Activated T-helper 2 cell treated with anti-CD3 and anti-CD28 coated beads, Interferon-gamma antibody, Interleukin-2, Interleukin-4, amounts not matched to agents 10 μg/mL and 5 μg/mL and 100 μg/mL, durations not matched to agents 14 hours and 24 hours and 36 hours (primary cell): ENCODE measurements at regions of chr17 and their contacts with region 1.

Region 1: GRCh38 chr17:74748529-74749365 is at the start of gene NHERF1:
- DNase-seq: peak; percentile 93
- H3K4me3 Mint-ChIP-seq: peak within 1 kb of the TSS; percentile 97
- H3K27ac Mint-ChIP-seq: peak within 1 kb of the TSS; percentile 81
- H3K4me1 Mint-ChIP-seq: peaks cover 57% of the 10 kb centered on the region
- H3K27me3 Mint-ChIP-seq: no peaks in the 10 kb centered on the region
- total RNA-seq, gene NHERF1: 129 and 133 TPM in 2 replicates

Region 2: GRCh38 chr17:74280093-74280513 is 468.6 kb before region 1 on chr17:
- intact Hi-C with region 1: loop called (anchors 5 kb)
- DNase-seq: peak; percentile 69
- H3K4me3 Mint-ChIP-seq: peak overlapping the region; percentile 9
- H3K27ac Mint-ChIP-seq: peak overlapping the region; percentile 90
- H3K4me1 Mint-ChIP-seq: peaks cover 50% of the 10 kb centered on the region
- H3K27me3 Mint-ChIP-seq: no peaks in the 10 kb centered on the region

Region 3: GRCh38 chr17:74759243-74759801 is 10.6 kb after region 1 on chr17:
- intact Hi-C with region 1: loop called (anchors 1 kb)
- DNase-seq: peak; percentile 53
- H3K4me3 Mint-ChIP-seq: peak overlapping the region; percentile 41
- H3K27ac Mint-ChIP-seq: peak overlapping the region; percentile 65
- H3K4me1 Mint-ChIP-seq: peaks cover 45% of the 10 kb centered on the region
- H3K27me3 Mint-ChIP-seq: no peaks in the 10 kb centered on the region

Region 4: DNA sequence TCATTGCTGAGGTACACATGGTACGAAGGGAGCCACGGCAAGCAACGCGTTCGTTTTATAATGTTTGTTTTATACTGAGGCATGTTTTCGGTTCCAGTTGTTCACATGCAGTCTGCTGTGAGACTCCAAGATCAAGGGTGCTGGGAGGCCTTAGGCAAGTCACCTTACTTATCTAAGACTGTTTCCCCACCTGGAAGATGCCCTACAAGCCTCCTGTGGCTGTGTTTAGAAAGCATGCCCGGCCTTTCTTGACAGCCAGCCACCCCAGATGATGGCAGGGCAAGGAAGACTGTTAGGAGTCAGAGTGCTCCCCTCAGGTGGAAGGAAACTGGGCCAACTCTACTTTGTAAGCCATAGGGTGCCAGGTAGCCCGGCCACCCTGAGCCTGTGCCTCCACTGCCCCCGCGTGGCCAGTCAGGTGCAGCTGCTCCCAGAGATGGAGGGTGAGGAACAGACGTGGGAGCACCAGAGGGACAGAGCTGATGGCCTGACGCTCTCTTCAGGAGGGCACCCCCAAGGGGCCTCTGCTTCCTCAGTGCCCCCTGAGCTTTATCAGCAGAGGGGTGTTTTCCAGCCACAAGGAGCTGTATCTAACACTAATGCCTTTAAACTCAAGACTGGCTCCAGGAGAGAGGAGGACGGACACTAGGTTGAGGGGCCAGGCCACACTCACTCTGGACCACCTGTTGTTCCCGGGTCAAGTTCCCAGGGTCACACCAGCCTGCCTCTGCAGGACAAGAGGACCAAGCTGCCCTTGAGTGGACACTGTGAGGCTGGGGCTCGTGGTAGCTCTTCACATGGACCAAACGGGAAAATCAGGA is 22.0 kb after region 1 on chr17:
- intact Hi-C with region 1: loop called (anchors 1 kb)
- DNase-seq: peak; percentile 60
- H3K4me3 Mint-ChIP-seq: no peak overlapping the region
- H3K27ac Mint-ChIP-seq: peak overlapping the region; percentile 43
- H3K4me1 Mint-ChIP-seq: peaks cover 19% of the 10 kb centered on the region
- H3K27me3 Mint-ChIP-seq: no peaks in the 10 kb centered on the region

Region 5: DNA sequence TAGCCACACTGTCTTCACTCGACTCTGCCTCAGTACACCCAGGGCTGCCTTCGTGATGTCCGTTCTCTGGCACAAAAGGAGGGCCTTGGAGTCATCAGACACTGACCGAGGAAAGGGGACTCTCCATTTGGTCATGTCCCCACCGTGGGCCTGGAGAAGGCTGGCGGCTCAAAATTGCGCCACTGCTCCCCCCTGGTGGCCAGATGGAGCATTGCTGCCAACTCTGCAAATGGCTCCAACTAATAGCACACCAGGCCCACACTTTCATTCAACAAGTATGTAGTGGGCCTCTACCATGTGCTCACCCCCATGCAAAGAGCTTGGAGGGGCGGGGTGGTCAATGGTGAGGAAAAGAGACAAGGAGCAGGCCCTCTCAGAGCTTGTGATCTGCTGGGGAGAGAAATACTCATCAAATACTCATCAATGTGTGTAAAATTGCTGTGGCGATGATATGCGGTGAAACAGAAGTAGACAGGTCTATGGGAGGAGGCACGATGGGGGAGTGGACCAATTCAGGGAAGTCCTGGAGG is 116.2 kb after region 1 on chr17:
- intact Hi-C with region 1: loop called (anchors 2 kb)
- DNase-seq: peak; percentile 61
- H3K4me3 Mint-ChIP-seq: no peak overlapping the region
- H3K27ac Mint-ChIP-seq: no peak overlapping the region
- H3K4me1 Mint-ChIP-seq: peaks cover 3% of the 10 kb centered on the region
- H3K27me3 Mint-ChIP-seq: peaks cover 11% of the 10 kb centered on the region